MCF 10A (cell line): ENCODE measurements at regions of chr15 and their contacts with region 1.

Region 1: GRCh38 chr15:66004618-66005262 is 135.4 kb downstream of the RAB11A start:
- DNase-seq: peak; percentile 50
- H3K4me3 Mint-ChIP-seq: no peak overlapping the region
- H3K27ac Mint-ChIP-seq: no peak overlapping the region
- H3K4me1 Mint-ChIP-seq: peaks cover 4% of the 10 kb centered on the region
- H3K27me3 Mint-ChIP-seq: peaks cover 45% of the 10 kb centered on the region
- CTCF ChIP-seq: no peak

Region 2: DNA sequence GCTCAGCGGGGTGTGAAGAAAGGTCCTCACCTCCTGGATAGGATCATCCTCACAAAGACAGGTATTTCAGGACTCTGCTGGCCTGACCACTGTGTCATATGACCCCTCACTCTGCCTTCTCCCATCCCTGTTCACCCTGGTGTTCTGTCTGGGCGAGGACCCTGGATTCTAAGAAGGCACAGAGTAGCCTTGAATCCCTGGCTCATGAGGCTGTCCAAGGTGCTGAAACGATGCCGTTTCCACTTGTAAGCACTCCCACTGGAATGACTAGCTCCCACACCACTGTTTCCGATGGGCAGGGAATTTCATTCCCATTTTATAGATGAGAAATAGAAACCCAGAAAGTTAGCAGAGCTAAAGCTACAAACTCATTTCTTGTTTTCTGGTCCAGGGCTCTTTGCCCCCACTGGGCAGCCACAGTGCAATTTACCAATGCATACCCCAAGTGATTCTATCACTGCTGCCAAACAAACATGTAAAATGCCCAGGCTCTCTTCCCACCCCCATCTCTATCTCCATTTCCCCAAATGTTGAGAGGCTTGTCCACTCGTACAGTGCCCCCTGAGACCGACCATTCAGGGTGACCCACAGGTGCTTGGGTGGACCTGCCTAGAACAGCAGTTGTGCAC is 52.2 kb before region 1 on chr15:
- CTCF ChIA-PET with region 1: interaction called, 4 read pairs
- POLR2A ChIA-PET with region 1: no interaction called
- intact Hi-C with region 1: loop called (anchors 2 kb)
- DNase-seq: peak; percentile 64
- H3K4me3 Mint-ChIP-seq: no peak overlapping the region
- H3K27ac Mint-ChIP-seq: no peak overlapping the region
- H3K4me1 Mint-ChIP-seq: peaks cover 5% of the 10 kb centered on the region
- H3K27me3 Mint-ChIP-seq: peaks cover 28% of the 10 kb centered on the region
- CTCF ChIP-seq: no peak